Naive thymus-derived CD4-positive, alpha-beta T cell (primary cell): ENCODE measurements at regions of chr6 and their contacts with region 1.

Region 1: DNA sequence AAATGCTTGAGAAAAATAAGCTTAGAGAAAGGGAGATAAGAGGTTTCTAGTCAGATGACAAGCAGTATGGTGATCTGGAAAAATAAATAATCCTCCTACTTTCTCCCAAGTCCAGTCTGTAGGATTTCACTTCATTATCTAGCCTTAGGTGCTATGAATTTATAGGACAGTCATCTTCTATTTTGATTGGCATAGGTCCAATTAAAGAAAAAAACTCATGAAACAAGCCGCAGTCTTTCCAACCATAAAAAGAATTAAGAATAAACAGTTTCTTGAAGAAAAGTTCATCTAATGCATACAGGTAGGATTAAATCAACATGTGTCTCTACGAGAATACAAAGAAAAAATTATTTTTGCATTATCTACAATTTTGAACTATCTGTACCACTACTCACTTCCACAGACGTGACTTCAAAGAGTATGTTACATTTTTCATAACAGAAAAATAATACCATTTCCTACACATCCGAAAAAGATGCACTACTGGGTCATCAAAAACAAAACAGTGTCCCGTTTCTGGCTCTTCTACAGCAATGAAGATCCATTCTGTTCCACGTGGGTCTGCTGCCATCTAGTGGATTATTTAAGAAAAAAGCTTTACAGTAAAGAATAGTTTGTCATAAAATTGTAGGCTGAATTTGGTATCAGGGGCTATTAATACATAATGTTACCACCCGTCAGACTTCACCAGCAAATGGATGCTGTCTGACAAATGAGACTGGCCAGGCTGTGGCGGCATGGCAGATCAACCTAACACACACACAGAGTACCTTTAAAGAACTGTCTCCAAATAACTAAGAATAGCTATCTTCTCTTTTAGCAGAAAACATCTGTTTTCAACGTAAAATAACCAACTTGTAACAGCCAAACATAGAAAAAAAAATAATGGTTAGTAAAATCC is 28.9 kb downstream of the STX7 start:
- DNase-seq: peak in 7 of 9 donors; percentile 37 to 69 (median 61)
- ATAC-seq: peak; percentile 83
- H3K4me3 ChIP-seq: no peak overlapping the region
- H3K4me3 Mint-ChIP-seq: no peak overlapping the region
- H3K27ac ChIP-seq: no peak overlapping the region
- H3K27ac Mint-ChIP-seq: peak overlapping the region in 2 of 9 donors; percentile 4 to 24
- H3K4me1 ChIP-seq: no peaks in the 10 kb centered on the region
- H3K4me1 Mint-ChIP-seq: peaks cover 0 to 12% (median 10%) of the 10 kb centered on the region in 7 donors
- H3K27me3 ChIP-seq: no peaks in the 10 kb centered on the region
- H3K27me3 Mint-ChIP-seq: no peaks in the 10 kb centered on the region

Region 2: GRCh38 chr6:131914967-131915751 is 568.9 kb before region 1 on chr6:
- CTCF ChIA-PET with region 1: no interaction called
- POLR2A ChIA-PET with region 1: no interaction called
- intact Hi-C with region 1: loop called (anchors 1 kb)
- DNase-seq: peak in 7 of 9 donors; percentile 12 to 43 (median 27)
- ATAC-seq: peak; percentile 70
- H3K4me3 ChIP-seq: no peak overlapping the region
- H3K4me3 Mint-ChIP-seq: no peak overlapping the region
- H3K27ac ChIP-seq: no peak overlapping the region
- H3K27ac Mint-ChIP-seq: no peak overlapping the region
- H3K4me1 ChIP-seq: no peaks in the 10 kb centered on the region
- H3K4me1 Mint-ChIP-seq: peaks cover 0 to 12% (median 6%) of the 10 kb centered on the region in 7 donors
- H3K27me3 ChIP-seq: peaks cover 0 to 4% of the 10 kb centered on the region in 2 donors
- H3K27me3 Mint-ChIP-seq: peaks cover 32 to 70% (median 58%) of the 10 kb centered on the region in 5 donors

Region 3: GRCh38 chr6:132279592-132280139 is 204.4 kb before region 1 on chr6:
- CTCF ChIA-PET with region 1: interaction called, 72 read pairs
- POLR2A ChIA-PET with region 1: no interaction called
- intact Hi-C with region 1: loop called (anchors 1 kb)
- DNase-seq: peak; percentile 43 to 79 (median 71)
- ATAC-seq: peak; percentile 89
- H3K4me3 ChIP-seq: peak overlapping the region; percentile 63
- H3K4me3 Mint-ChIP-seq: peak overlapping the region in 9 of 10 donors; percentile 56 to 89 (median 84)
- H3K27ac ChIP-seq: no peak overlapping the region
- H3K27ac Mint-ChIP-seq: no peak overlapping the region
- H3K4me1 ChIP-seq: no peaks in the 10 kb centered on the region
- H3K4me1 Mint-ChIP-seq: no peaks in the 10 kb centered on the region
- H3K27me3 ChIP-seq: no peaks in the 10 kb centered on the region
- H3K27me3 Mint-ChIP-seq: peaks cover 19 to 38% (median 27%) of the 10 kb centered on the region in 5 donors

Region 4: GRCh38 chr6:132300323-132300949 is 183.6 kb before region 1 on chr6:
- CTCF ChIA-PET with region 1: interaction called, 7 read pairs
- POLR2A ChIA-PET with region 1: no interaction called
- intact Hi-C with region 1: loop called (anchors 1 kb)
- DNase-seq: peak in 1 of 9 donors; percentile 11
- ATAC-seq: no peak
- H3K4me3 ChIP-seq: no peak overlapping the region
- H3K4me3 Mint-ChIP-seq: no peak overlapping the region
- H3K27ac ChIP-seq: no peak overlapping the region
- H3K27ac Mint-ChIP-seq: no peak overlapping the region
- H3K4me1 ChIP-seq: no peaks in the 10 kb centered on the region
- H3K4me1 Mint-ChIP-seq: peaks cover 0 to 1% (median 0%) of the 10 kb centered on the region in 7 donors
- H3K27me3 ChIP-seq: no peaks in the 10 kb centered on the region
- H3K27me3 Mint-ChIP-seq: peaks cover 13 to 23% (median 19%) of the 10 kb centered on the region in 5 donors

Region 5: GRCh38 chr6:132495604-132496079 is 11.6 kb after region 1 on chr6:
- CTCF ChIA-PET with region 1: interaction called, 14 read pairs
- POLR2A ChIA-PET with region 1: no interaction called
- intact Hi-C with region 1: no loop called
- DNase-seq: no peak
- ATAC-seq: no peak
- H3K4me3 ChIP-seq: no peak overlapping the region
- H3K4me3 Mint-ChIP-seq: no peak overlapping the region
- H3K27ac ChIP-seq: no peak overlapping the region
- H3K27ac Mint-ChIP-seq: peak overlapping the region in 2 of 9 donors; percentile 14 to 51
- H3K4me1 ChIP-seq: peaks cover 0 to 10% of the 10 kb centered on the region in 2 donors
- H3K4me1 Mint-ChIP-seq: peaks cover 18 to 56% (median 34%) of the 10 kb centered on the region in 7 donors
- H3K27me3 ChIP-seq: no peaks in the 10 kb centered on the region
- H3K27me3 Mint-ChIP-seq: no peaks in the 10 kb centered on the region

Region 6: DNA sequence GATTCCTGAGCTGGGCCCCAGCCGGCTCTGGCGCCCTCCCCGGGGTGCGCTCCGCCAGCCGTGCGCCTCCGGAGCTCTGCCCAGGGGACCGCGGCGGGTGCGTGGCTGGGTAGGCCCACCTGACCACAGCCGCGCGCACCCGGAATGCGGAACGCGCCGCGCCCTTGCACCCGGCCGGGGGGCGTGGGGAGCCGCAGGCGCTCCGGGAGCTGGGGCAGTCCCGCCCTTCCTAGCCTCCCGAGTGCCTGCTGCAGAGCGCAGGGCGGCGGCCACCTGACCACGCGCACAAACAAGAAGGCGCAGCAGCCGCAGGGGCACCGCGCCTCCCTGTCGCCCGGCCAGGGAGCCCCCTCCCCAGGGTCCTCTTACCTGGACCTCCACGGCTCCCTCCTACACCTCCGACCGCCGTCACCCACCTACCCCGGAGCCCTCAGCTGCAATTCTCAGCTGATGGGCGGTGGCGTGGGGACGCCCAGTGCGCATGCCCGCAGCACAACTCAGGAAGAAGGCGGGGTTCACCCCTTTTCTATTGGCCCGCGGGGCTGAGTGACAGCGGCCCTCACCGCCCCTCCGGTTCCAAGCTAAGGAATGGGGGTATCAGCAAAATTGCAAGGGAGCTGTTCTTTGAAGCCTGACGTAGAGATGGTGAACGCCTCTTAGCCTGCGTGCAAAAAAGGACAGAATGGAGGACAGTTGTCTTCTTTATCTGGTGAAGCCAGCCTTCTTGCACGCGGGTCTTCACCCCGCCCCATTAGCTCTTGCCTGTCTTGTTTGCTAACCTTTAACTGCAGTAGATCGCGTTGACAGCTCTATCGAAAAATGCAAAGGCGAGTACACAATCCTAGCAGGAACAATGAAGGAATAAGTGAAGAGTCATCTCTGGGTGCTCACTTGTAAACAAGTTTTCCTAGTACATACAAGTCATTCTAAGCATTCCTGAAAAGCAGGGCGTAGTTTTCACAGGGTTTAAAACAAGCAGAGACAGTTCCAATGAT is 28.9 kb after region 1 on chr6 and contains the start of gene STX7:
- CTCF ChIA-PET with region 1: interaction called, 3 read pairs
- POLR2A ChIA-PET with region 1: no interaction called
- intact Hi-C with region 1: loop called in 1 of 2 experiments (anchors 2 kb)
- DNase-seq: peak; percentile 77 to 90 (median 87)
- ATAC-seq: peak; percentile 95
- H3K4me3 ChIP-seq: peak within 1 kb of the TSS; percentile 78
- H3K4me3 Mint-ChIP-seq: peak within 1 kb of the TSS; percentile 89 to 99 (median 98)
- H3K27ac ChIP-seq: peak within 1 kb of the TSS; percentile 63
- H3K27ac Mint-ChIP-seq: peak within 1 kb of the TSS; percentile 81 to 95 (median 90)
- H3K4me1 ChIP-seq: peaks cover 10 to 11% of the 10 kb centered on the region in 2 donors
- H3K4me1 Mint-ChIP-seq: peaks cover 23 to 50% (median 38%) of the 10 kb centered on the region in 7 donors
- H3K27me3 ChIP-seq: no peaks in the 10 kb centered on the region
- H3K27me3 Mint-ChIP-seq: peaks cover 0 to 24% (median 0%) of the 10 kb centered on the region in 5 donors
- total RNA-seq, gene STX7: 14.7 to 43.3 (median 24.0) TPM